Activated CD4-positive, alpha-beta T cell treated with anti-CD3 and anti-CD28 coated beads for 36 hours (primary cell): ENCODE measurements at regions of chr12 and their contacts with region 1.

Region 1: DNA sequence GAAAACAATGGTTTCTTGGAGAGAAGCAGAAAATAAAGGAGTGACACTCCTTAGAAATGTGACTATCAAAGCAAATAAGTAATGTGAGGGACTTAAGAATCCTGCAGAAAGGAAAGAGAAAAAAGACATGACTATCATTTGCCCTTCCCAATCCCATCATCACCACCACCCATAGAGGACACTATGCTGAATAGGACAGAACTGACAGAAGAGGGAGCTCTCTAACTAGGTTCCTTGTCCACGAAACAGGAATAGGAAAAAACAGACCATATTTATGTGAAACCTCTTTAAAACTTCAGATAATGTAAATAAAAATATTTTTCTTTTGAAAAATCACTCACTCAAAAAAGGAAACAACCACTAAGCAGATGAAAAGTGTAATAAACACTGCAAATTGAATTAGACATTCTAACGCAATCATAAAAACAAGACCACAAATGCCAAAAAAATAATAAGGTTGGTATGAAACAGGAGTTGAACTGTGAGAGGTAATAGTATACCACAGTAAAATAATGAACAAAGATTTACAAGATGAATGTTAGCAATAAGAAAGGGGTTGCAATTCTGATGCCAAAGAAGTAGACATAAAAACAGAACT is 24.1 kb downstream of the KLRD1 start:
- DNase-seq: no peak
- ATAC-seq: peak; percentile 55
- H3K4me3 Mint-ChIP-seq: no peak overlapping the region
- H3K27ac Mint-ChIP-seq: no peak overlapping the region
- H3K4me1 Mint-ChIP-seq: peaks cover 2% of the 10 kb centered on the region
- H3K27me3 Mint-ChIP-seq: no peaks in the 10 kb centered on the region

Region 2: GRCh38 chr12:9872742-9873141 is 459.0 kb before region 1 on chr12:
- CTCF ChIA-PET with region 1: no interaction called
- POLR2A ChIA-PET with region 1: no interaction called
- intact Hi-C with region 1: no loop called
- DNase-seq: no peak
- ATAC-seq: no peak
- H3K4me3 Mint-ChIP-seq: no peak overlapping the region
- H3K27ac Mint-ChIP-seq: no peak overlapping the region
- H3K4me1 Mint-ChIP-seq: peaks cover 18% of the 10 kb centered on the region
- H3K27me3 Mint-ChIP-seq: no peaks in the 10 kb centered on the region

Region 3: DNA sequence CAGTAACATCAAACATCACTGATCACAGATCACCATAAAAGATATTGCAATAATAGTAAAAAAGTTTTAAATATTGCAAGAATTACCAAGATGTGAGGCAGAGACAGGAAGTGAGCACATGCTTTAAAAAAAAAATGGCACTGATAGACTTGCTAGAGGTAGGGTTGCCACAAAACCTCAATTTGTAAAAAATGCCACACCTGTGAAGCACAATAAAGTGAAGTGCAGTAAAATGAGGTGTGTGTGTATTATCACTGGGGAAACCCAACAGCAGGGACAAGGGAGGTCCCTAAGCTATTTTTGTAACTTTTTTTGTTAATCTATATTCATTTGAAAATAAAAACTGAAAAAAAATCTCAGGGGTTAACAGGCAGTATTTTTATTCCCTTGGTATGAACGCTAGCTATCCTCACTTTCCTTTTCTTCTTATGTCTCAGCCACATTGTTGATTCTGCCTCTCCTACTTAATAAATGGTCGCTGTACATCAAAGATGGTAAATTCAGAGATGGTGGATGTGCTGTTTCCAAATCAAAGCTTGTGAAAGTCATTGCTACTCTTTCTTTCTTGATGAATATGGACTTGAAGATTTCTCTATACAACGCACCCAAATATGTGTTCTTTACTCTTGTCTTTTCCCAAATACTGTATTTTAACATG is 38.0 kb before region 1 on chr12:
- CTCF ChIA-PET with region 1: no interaction called
- POLR2A ChIA-PET with region 1: no interaction called
- intact Hi-C with region 1: loop called in 1 of 2 experiments (anchors 5 kb)
- DNase-seq: no peak
- ATAC-seq: peak; percentile 54
- H3K4me3 Mint-ChIP-seq: no peak overlapping the region
- H3K27ac Mint-ChIP-seq: no peak overlapping the region
- H3K4me1 Mint-ChIP-seq: peaks cover 21% of the 10 kb centered on the region
- H3K27me3 Mint-ChIP-seq: peaks cover 5% of the 10 kb centered on the region

Region 4: DNA sequence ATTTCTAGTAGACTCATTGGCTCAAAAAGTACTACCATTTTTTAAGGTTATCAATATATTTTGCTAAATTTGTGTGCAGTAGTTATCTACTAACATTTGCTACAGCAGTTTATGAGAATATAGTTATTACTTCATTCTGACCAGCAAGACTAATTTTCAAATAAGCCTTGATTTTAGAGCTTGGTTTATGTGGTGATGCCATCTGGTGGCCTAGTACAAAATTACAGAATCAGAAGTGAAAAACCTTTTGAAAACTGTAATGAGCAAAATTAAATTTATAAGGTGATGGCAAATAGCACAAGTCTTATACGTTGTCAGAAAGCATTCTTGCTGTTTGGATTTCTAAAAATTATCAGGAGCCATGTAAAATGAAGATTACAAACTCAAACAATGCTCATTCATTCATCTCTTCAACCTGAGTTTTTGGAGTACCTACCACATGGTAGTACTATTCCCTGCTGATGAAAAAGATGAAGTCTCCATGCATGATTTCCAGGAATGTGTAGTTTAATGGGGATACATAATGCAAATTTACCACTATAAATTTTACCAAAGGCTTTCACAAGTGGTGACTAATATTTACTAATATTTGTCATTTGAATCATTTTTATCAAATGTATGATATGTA is 230.7 kb after region 1 on chr12:
- CTCF ChIA-PET with region 1: interaction called, 3 read pairs
- POLR2A ChIA-PET with region 1: no interaction called
- intact Hi-C with region 1: loop called (anchors 1 kb)
- DNase-seq: peak; percentile 22
- ATAC-seq: no peak
- H3K4me3 Mint-ChIP-seq: no peak overlapping the region
- H3K27ac Mint-ChIP-seq: no peak overlapping the region
- H3K4me1 Mint-ChIP-seq: peaks cover 4% of the 10 kb centered on the region
- H3K27me3 Mint-ChIP-seq: peaks cover 6% of the 10 kb centered on the region